Panc1 (cell line): ENCODE measurements at regions of chr2 and their contacts with region 1.

Region 1: DNA sequence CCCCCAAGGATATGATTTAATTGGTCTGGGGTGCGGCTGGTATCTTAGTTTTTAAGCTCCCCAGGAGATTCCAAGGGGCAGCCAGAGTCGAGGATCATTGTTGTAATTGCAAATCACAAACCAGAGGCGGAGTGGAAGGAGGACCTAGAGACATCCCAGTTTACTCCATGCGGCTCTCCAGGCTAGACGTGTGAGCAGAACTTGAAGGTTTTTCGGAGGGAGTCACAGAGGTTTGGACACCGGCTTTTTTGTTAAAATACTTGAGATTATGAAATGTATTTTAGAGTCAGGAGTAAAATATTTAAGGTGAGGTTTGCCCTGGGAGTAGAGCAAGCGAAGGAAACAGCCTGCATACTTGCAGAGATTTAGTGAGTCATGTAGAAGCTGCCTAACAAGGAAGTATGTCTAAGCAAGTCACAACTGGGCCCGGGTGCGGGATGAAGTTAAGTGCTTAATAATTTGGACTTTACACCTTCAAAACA is 39.5 kb downstream of the TGOLN2 start:
- DNase-seq: no peak
- ATAC-seq: no peak
- H3K4me3 ChIP-seq: no peak overlapping the region
- H3K27ac ChIP-seq: no peak overlapping the region
- H3K4me1 ChIP-seq: peaks cover 10% of the 10 kb centered on the region; the same call in 1 of the 2 replicates
- H3K27me3 ChIP-seq: no peaks in the 10 kb centered on the region
- CTCF ChIP-seq: no peak

Region 2: GRCh38 chr2:84925724-84926376 is 362.4 kb before region 1 on chr2:
- CTCF ChIA-PET with region 1: no interaction called
- POLR2A ChIA-PET with region 1: no interaction called
- in situ Hi-C with region 1: no loop called
- intact Hi-C with region 1: no loop called
- DNase-seq: peak; percentile 97
- ATAC-seq: peak; percentile 91
- H3K4me3 ChIP-seq: peak overlapping the region; percentile 62 to 79
- H3K27ac ChIP-seq: peak overlapping the region; percentile 60
- H3K4me1 ChIP-seq: peaks cover 17% of the 10 kb centered on the region
- H3K27me3 ChIP-seq: no peaks in the 10 kb centered on the region
- CTCF ChIP-seq: peak; percentile 100

Region 3: DNA sequence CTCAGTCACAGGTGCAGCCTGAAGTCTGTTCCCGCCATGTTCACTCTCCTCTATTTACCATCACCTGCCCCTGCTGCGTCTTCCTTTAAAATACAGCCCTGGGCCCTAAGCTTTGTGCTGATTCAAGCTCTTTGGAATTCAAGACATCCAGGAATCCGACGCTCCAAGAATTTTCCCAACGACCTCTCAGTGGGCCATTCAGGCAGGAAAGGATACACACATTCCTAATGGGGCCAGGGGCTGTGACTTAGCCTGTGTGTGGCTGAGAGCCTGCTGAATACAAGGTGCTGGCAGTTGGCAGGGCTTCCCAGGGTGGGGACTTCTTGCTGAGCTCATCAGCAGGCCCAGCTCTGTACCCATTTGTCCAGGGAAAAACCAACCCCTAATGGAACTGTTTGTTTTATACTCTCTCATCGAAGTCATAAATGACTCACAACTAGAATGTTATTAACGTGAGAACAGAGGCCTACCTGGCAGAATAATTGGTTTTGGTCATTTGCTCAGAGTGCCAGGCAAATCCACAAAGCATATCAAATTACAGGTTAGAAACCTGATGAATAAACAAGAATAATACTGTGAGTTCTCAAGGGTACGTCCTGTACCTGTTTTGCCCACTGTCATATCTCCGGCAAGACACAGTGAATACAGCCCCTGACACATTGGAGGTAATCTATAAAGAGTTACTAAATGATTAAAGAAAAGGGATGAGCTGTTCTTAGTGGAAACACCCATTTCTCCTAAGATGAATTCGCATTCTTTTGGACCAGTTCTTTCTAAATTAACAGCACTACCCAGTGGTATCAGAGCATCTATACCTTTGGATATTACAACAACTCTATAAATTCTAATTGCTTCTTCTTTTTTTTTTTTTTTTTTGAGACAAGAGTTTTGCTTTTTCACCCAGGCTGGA is 329.9 kb before region 1 on chr2:
- CTCF ChIA-PET with region 1: no interaction called
- POLR2A ChIA-PET with region 1: no interaction called
- in situ Hi-C with region 1: no loop called
- intact Hi-C with region 1: no loop called
- DNase-seq: peak; percentile 97
- ATAC-seq: peak; percentile 92
- H3K4me3 ChIP-seq: peak overlapping the region in 1 of 2 experiments; percentile 26; a peak in 2 of 4 replicates
- H3K27ac ChIP-seq: peak overlapping the region; percentile 94
- H3K4me1 ChIP-seq: peaks cover 48% of the 10 kb centered on the region
- H3K27me3 ChIP-seq: no peaks in the 10 kb centered on the region
- CTCF ChIP-seq: no peak

Region 4: GRCh38 chr2:85132834-85133637 is 155.2 kb before region 1 on chr2 and contains the start of gene TCF7L1:
- CTCF ChIA-PET with region 1: interaction called, 8 read pairs
- POLR2A ChIA-PET with region 1: interaction called, 12 read pairs
- in situ Hi-C with region 1: no loop called
- intact Hi-C with region 1: loop called (anchors 5 kb)
- DNase-seq: peak; percentile 15
- ATAC-seq: peak; percentile 94
- H3K4me3 ChIP-seq: peak within 1 kb of the TSS; percentile 61 to 66
- H3K27ac ChIP-seq: peak within 1 kb of the TSS; percentile 80
- H3K4me1 ChIP-seq: peaks cover 11% of the 10 kb centered on the region
- H3K27me3 ChIP-seq: no peaks in the 10 kb centered on the region
- CTCF ChIP-seq: peak; percentile 95
- total RNA-seq, gene TCF7L1: 30.4 TPM

Region 5: DNA sequence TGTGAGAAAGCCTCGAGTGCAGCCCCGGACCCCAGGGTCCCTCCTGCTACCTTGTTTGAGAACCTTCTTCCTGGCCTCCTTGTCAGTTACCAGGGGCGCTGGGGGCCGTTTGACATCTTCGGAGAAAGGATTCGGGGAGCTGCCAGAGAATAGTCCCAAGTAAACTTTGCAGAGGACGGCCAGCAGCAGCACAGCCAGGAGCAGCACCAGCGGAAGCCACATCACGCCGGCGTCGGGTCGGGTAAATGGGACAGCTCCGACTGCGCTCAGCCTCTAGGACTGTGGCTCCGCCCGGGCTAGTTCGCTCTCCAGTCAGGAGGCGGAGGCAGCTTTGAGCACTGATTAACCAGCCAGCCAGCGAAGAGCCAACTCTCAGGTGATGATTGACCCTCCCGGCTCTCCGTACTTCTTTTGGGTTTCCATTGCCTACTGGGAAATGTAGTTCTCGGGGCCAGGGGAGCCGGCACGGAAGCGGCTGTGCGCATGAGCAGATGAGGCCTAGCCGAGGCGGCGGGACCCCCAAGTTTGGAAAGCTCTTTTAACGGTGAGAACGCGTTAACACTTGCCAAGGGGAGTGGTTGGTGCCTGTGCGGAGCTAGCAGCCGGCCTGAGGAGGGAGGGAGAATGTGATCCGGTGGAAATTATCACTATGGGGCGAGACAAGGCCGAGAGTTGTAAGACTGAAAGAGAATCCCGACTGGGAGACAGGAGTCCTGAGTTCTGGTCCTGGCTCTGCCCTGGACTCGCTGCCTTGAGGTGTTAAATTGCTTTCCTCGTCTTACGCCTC is 66.2 kb after region 1 on chr2 and contains the starts of genes ELMOD3 and RETSAT:
- CTCF ChIA-PET with region 1: no interaction called
- POLR2A ChIA-PET with region 1: no interaction called
- in situ Hi-C with region 1: no loop called
- intact Hi-C with region 1: no loop called
- DNase-seq: peak; percentile 97
- ATAC-seq: peak; percentile 100
- H3K4me3 ChIP-seq: peak within 1 kb of the TSS; percentile 75 to 99
- H3K27ac ChIP-seq: peak within 1 kb of the TSS; percentile 94
- H3K4me1 ChIP-seq: 0 out of 2 replicates have a peak, but pooled peaks cover 4% of the 10 kb centered on the region
- H3K27me3 ChIP-seq: no peaks in the 10 kb centered on the region
- CTCF ChIP-seq: no peak
- total RNA-seq, gene ELMOD3: 14.8 TPM
- total RNA-seq, gene RETSAT: 50.9 TPM

Region 6: GRCh38 chr2:86556198-86556899 is 1268.1 kb after region 1 on chr2:
- CTCF ChIA-PET with region 1: no interaction called
- POLR2A ChIA-PET with region 1: no interaction called
- in situ Hi-C with region 1: no loop called
- intact Hi-C with region 1: no loop called
- DNase-seq: no peak
- ATAC-seq: no peak
- H3K4me3 ChIP-seq: no peak overlapping the region
- H3K27ac ChIP-seq: no peak overlapping the region
- H3K4me1 ChIP-seq: peaks cover 10% of the 10 kb centered on the region
- H3K27me3 ChIP-seq: no peaks in the 10 kb centered on the region
- CTCF ChIP-seq: no peak